ENCODE measurements at regions of chr10 and their contacts with region 1.

Region 1: GRCh38 chr10:82796510-82796909 is 921.5 kb downstream of the NRG3 start:
- DNase-seq: no peak
- H3K4me3 ChIP-seq: no peak overlapping the region
- H3K27ac ChIP-seq: no peak overlapping the region
- H3K4me1 ChIP-seq: no peaks in the 10 kb centered on the region
- H3K27me3 ChIP-seq: no peaks in the 10 kb centered on the region
- CTCF ChIP-seq: peak in 1 of 4 experiments; percentile 24
- EP300 ChIP-seq: no peak
- POLR2A ChIP-seq: no peak

Region 2: DNA sequence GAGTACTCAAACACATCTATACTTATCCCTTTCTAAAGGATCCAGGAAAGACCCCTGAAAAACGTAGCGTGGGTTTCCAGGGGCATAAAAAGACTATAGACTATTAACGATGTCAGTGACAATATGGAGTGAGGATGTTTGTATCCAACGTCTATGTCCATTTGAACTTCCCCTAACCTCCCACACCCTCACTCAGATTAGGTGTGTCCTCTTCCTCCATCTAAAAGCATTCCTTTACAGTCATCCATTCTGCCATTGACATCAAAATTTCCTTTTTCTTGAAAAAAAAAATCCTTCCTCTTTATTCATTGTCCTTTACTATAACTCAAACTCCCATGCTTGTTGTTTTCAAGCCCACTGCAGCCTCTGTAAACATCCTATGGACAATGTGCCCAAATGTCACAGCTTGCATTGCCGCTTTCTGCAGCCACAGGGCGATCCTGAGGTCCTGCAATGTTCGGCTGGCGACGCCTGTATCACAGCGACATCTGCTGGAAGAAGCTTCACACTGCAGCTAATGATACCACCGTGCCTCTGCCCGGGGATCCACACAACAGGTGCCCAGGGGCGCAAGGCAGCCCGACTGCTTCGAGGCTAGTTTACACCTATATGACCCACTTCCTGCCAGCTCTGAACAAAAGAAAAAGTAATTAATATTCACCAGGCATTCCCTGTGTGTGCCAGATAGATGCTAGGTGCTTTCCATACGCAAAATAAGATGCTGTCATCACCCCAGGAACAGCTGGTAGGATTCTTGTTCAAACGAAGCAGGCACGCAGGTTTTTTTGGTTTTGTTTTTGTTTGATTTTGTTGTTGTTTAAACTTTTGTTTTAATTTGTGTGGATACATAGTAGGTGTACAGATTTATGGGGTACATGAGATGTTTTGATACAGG is 1074.9 kb after region 1 on chr10:
- intact Hi-C with region 1: loop called (anchors 5 kb)
- DNase-seq: peak; percentile 74
- H3K4me3 ChIP-seq: no peak overlapping the region
- H3K27ac ChIP-seq: no peak overlapping the region
- H3K4me1 ChIP-seq: no peaks in the 10 kb centered on the region
- H3K27me3 ChIP-seq: no peaks in the 10 kb centered on the region
- CTCF ChIP-seq: peak; percentile 40 to 91 (median 77)
- EP300 ChIP-seq: no peak
- POLR2A ChIP-seq: no peak